IMR-90 (cell line): ENCODE measurements at regions of chr3 and their contacts with region 1.

Region 1: GRCh38 chr3:184874709-184875644 is 63.0 kb downstream of the VPS8 start:
- DNase-seq: peak; percentile 32
- ATAC-seq: peak; percentile 51
- H3K4me3 ChIP-seq: no peak overlapping the region
- H3K27ac ChIP-seq: no peak overlapping the region
- H3K4me1 ChIP-seq: no peaks in the 10 kb centered on the region; the same call in 1 of the 2 replicates
- H3K27me3 ChIP-seq: no peaks in the 10 kb centered on the region
- CTCF ChIP-seq: peak; percentile 61
- POLR2A ChIP-seq: no peak
- RAD21 ChIP-seq: peak; percentile 78

Region 2: DNA sequence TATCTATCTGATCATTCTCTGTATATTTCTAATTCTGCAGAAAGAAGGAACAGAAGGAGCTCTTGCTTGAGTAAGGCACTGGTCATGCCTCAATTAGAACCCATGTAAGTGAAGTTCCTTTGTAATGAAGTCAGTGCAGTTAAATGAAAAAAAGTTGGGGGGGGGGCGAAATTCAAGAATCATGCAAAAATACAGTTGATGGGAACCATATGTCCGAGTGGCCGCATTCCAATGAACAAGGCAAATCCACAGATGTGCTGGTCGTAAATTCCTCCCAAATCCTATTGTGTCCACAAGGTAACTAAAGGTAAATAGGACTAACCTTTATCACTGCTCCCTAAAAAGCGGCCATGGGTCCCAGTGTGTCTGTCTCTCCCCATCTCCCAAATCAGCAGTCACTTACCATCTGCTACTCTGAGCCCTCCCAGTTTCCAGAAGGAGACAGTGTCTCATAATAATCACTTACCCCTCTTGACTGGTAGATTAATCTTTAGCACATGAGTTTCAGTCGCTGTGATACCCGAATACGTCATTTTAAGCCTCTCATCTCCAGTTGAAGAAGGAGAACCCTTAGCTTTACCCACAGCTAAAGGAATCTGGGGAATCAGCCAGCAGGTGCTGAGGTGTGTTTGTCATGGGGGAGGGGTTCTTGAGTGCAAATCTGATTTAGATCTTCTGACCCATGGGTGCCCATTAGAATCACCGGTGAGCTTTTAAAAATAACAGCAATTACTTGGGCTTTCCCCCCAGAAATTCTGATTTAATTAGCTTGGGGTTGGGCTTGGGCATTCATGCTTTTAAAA is 369.7 kb before region 1 on chr3:
- CTCF ChIA-PET with region 1: no interaction called
- POLR2A ChIA-PET with region 1: interaction called, 13 read pairs
- dilution Hi-C with region 1: no loop called
- in situ Hi-C with region 1: no loop called
- intact Hi-C with region 1: no loop called
- DNase-seq: no peak
- ATAC-seq: no peak
- H3K4me3 ChIP-seq: no peak overlapping the region
- H3K27ac ChIP-seq: no peak overlapping the region
- H3K4me1 ChIP-seq: no peaks in the 10 kb centered on the region
- H3K27me3 ChIP-seq: peaks cover 44% of the 10 kb centered on the region
- CTCF ChIP-seq: no peak
- POLR2A ChIP-seq: no peak
- RAD21 ChIP-seq: no peak

Region 3: GRCh38 chr3:185176750-185177359 is 301.9 kb after region 1 on chr3:
- CTCF ChIA-PET with region 1: interaction called, 6 read pairs
- POLR2A ChIA-PET with region 1: no interaction called
- dilution Hi-C with region 1: no loop called
- in situ Hi-C with region 1: loop called (anchors 25 kb)
- intact Hi-C with region 1: loop called (anchors 1 kb)
- DNase-seq: peak; percentile 40
- ATAC-seq: peak; percentile 70
- H3K4me3 ChIP-seq: no peak overlapping the region
- H3K27ac ChIP-seq: no peak overlapping the region
- H3K4me1 ChIP-seq: peaks cover 6% of the 10 kb centered on the region; the same call in 1 of the 2 replicates
- H3K27me3 ChIP-seq: peaks cover 12% of the 10 kb centered on the region
- CTCF ChIP-seq: peak; percentile 62
- POLR2A ChIP-seq: no peak
- RAD21 ChIP-seq: peak; percentile 57

Region 4: DNA sequence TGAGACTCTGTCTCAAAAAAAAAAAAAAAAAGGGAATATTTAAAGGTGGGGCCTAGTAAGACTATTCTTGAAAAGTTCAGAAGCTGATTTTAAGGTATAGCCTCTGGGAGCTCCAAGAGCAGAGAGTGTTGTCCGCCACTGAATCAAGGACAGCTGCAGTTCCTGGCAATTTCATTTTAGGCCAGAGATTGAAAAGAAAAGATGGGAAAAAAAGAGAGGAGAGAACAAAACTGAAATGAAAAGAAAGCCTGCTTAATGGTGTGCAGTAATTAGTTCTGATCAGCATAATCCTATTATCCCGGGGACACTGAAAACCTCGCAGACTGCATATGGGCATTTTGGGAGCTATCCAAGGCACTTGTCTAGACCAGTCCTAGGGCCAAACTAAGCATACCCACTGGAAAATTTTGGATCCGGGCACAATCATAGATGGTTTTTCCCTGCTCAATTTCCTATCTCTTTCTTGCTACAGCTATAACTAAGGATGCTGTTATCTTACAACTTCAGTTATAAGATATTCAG is 335.7 kb after region 1 on chr3:
- CTCF ChIA-PET with region 1: interaction called, 4 read pairs
- POLR2A ChIA-PET with region 1: no interaction called
- dilution Hi-C with region 1: no loop called
- in situ Hi-C with region 1: no loop called
- intact Hi-C with region 1: loop called (anchors 5 kb)
- DNase-seq: no peak
- ATAC-seq: no peak
- H3K4me3 ChIP-seq: no peak overlapping the region
- H3K27ac ChIP-seq: no peak overlapping the region
- H3K4me1 ChIP-seq: no peaks in the 10 kb centered on the region
- H3K27me3 ChIP-seq: no peaks in the 10 kb centered on the region
- CTCF ChIP-seq: no peak
- POLR2A ChIP-seq: no peak
- RAD21 ChIP-seq: no peak

Region 5: DNA sequence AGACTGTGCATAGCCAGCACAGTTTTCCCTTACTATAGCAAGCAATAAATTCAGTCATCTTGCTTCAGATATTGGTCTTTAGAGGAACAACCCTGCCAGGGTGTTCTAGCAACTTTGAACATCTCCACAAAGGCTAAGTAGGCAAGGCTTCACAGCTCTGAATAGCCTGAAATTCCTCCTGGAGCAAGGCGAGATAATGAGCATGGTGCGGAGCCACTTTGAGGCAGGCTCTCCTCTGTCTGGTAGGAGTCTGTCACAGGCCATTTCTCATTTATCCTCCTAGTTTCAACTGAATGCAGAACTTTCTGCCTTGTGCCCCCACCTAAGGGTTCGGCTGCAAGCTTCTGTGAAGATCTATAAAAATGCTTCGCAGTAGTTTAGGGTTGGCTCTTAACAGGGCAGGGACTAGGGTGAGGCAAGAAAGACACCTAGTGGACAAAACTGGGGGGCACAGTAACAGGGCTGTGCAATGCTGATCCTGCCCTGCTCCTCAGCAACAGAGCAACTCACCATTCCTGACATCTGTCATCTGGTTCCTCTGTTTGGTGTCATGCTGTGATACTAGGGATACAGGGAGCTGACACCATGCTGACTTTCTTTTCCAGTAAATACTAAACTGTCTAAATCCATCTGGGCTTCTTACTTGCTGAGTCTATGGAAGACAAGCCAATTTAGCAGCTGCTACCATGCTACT is 395.4 kb after region 1 on chr3:
- CTCF ChIA-PET with region 1: no interaction called
- POLR2A ChIA-PET with region 1: no interaction called
- dilution Hi-C with region 1: no loop called
- in situ Hi-C with region 1: no loop called
- intact Hi-C with region 1: loop called (anchors 5 kb)
- DNase-seq: peak; percentile 31
- ATAC-seq: peak; percentile 89
- H3K4me3 ChIP-seq: no peak overlapping the region
- H3K27ac ChIP-seq: no peak overlapping the region
- H3K4me1 ChIP-seq: no peaks in the 10 kb centered on the region
- H3K27me3 ChIP-seq: peaks cover 4% of the 10 kb centered on the region
- CTCF ChIP-seq: peak; percentile 54
- POLR2A ChIP-seq: no peak
- RAD21 ChIP-seq: peak; percentile 62

Region 6: DNA sequence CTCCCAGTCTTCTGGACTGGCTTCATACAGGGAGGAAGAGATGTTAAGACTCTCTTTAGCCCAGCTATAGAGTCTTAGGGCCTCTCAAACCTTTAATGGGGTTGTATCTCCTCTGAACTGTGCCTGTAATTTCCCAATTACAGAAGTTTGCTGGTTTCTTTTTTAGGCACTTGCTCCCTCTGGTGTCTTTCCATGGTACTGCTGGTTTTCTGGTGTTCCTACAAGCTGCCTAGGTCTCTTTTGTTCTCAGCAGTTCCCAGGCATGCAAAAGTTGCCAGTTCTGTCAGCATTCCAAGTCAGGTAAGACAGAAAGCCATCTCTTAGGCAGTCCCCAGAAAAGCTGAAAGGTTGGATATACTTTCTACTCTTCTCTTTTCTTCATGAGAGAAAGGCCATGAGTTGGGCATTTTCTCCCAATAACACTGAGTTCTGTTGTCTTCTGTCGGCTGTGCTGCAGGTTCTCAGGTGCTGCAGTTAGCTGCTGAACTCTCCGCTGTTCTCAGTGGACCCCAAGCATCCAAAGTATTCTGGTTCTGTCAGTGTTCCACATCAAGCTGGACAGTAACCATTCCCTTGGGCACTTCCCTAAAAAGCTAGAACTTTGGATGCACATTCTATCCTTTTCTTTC is 433.3 kb after region 1 on chr3:
- CTCF ChIA-PET with region 1: no interaction called
- POLR2A ChIA-PET with region 1: no interaction called
- dilution Hi-C with region 1: no loop called
- in situ Hi-C with region 1: no loop called
- intact Hi-C with region 1: loop called (anchors 1 kb)
- DNase-seq: peak; percentile 55
- ATAC-seq: peak; percentile 85
- H3K4me3 ChIP-seq: no peak overlapping the region
- H3K27ac ChIP-seq: no peak overlapping the region
- H3K4me1 ChIP-seq: no peaks in the 10 kb centered on the region
- H3K27me3 ChIP-seq: no peaks in the 10 kb centered on the region
- CTCF ChIP-seq: peak; percentile 59
- POLR2A ChIP-seq: no peak
- RAD21 ChIP-seq: peak; percentile 62

Region 7: GRCh38 chr3:185406121-185406620 is 531.2 kb after region 1 on chr3:
- CTCF ChIA-PET with region 1: no interaction called
- POLR2A ChIA-PET with region 1: no interaction called
- dilution Hi-C with region 1: no loop called
- in situ Hi-C with region 1: no loop called
- intact Hi-C with region 1: no loop called
- DNase-seq: no peak
- ATAC-seq: no peak
- H3K4me3 ChIP-seq: no peak overlapping the region
- H3K27ac ChIP-seq: no peak overlapping the region
- H3K4me1 ChIP-seq: peaks cover 1% of the 10 kb centered on the region; the same call in 1 of the 2 replicates
- H3K27me3 ChIP-seq: no peaks in the 10 kb centered on the region
- CTCF ChIP-seq: no peak
- POLR2A ChIP-seq: no peak
- RAD21 ChIP-seq: no peak